ENCODE measurements at regions of chr14 and their contacts with region 1.

Region 1: GRCh38 chr14:64387694-64388532 is at the start of gene MTHFD1:
- DNase-seq: peak; percentile 97
- H3K4me3 Mint-ChIP-seq: peak within 1 kb of the TSS; percentile 86
- H3K27ac Mint-ChIP-seq: peak within 1 kb of the TSS; percentile 92
- H3K4me1 Mint-ChIP-seq: peaks cover 33% of the 10 kb centered on the region
- H3K27me3 Mint-ChIP-seq: no peaks in the 10 kb centered on the region
- total RNA-seq, gene MTHFD1: 291 and 309 TPM in 2 replicates

Region 2: DNA sequence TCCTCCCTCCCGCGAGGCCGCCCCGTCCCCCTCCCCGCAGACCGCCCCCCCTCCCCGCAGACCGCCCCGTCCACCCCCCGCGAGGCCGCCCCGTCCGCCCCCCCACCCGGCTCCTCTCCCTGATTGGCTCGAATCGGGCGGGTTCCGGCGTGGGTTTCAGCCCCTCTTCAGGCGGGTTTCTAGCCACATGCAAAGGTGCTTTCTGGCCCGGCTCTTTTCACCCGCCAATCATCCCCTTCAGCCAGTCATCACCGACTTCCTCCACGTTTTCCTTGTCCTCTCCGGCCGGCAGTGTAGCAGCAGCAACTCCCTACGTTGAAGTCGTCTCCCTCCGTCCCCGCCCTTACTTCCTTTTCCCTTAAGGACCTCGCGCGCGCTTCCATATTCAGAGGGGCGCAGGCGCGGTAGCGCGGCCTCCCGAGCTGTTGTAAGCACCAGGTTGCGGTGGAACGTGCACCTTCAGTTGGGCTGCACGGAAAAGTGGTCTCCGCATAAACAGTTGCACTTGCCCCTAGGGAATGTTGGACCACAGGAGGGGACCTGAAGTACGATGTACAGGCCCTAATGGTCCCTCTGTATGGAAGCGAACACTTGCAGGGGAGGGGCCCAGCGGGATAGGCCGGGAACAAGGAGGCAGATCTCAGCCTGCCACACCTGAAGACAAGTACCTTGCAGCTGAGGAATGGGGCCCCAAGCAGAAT is 49.1 kb before region 1 on chr14:
- intact Hi-C with region 1: loop called (anchors 1 kb)
- DNase-seq: peak; percentile 89
- H3K4me3 Mint-ChIP-seq: peak overlapping the region; percentile 91
- H3K27ac Mint-ChIP-seq: peak overlapping the region; percentile 80
- H3K4me1 Mint-ChIP-seq: peaks cover 23% of the 10 kb centered on the region
- H3K27me3 Mint-ChIP-seq: no peaks in the 10 kb centered on the region

Region 3: DNA sequence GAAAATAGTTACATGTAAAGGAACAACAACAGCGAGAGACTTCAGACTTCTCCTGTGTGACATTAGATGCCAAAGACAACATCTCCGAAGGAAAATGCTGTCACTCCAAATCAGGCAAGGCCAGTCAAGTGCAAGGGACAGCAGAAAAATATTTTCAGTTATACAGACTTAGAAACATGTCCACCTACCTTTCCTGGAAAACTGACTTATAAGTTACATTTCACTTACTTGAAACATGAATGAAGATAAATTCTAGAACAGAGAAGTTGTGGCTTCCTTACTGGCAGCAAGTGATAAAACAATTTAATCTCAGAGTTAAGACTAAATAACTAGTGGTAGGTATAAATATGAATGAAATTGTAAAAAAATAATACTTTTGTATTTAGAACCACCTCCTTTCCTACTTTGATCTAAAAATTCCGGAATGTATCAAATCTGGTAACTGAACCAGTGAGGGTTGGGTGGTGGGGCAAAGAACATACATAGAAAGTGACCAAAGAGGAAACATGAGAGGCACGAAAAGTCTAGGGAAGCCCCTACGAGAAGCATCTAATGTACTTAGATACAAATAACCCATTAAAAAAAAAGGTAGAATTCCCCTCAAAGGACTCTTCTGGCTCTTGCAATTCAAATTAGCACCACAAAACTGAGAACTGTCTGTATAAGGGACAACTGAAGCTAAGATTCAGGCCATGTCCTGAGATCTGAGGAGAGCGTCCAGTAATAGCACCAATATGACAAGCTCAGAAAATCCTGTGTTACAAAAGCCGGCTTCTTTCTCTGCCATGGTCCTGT is 21.4 kb after region 1 on chr14:
- intact Hi-C with region 1: loop called (anchors 2 kb)
- DNase-seq: no peak
- H3K4me3 Mint-ChIP-seq: peak overlapping the region; percentile 13
- H3K27ac Mint-ChIP-seq: peak overlapping the region; percentile 75
- H3K4me1 Mint-ChIP-seq: peaks cover 61% of the 10 kb centered on the region
- H3K27me3 Mint-ChIP-seq: no peaks in the 10 kb centered on the region

Region 4: DNA sequence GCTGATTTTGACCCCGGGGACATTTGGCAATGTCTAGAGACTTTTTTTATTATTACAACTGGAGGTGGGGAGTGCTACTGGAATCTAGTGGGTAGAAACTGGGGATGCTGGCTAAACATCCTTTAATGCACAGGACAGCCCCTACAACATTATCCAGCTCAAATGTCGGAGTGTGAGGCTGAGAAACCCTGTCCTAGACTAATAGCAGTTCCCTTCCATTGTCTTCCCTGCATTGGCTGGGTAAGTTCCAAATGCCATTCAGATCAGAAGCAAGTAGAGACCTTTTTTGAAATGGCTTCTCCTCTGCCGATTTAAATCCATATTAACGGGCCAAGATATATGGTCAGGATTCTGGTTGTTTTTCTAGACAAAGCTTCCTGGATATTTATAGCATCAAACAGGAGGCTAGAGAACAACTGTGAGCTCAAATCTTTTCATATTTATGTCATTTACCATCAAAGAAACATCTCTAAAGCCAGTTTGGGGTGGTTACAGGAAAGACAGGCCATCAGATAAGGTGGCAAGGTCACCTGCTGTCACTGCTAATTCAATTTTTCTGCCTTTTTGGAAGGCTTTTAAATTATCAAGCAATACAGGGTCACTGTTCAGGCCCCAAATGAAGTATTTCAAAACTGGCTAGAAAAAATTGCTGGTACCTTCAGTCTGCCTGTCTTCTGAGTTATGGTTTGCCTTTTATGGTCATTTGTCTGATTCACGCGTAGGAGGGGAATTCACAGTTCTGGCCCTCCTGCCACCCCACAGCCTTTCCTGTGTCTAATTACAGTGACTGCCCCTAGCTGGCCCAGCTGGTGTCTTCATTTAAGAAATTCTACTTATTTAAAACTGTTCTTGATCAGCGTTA is 57.3 kb after region 1 on chr14:
- intact Hi-C with region 1: loop called (anchors 1 kb)
- DNase-seq: no peak
- H3K4me3 Mint-ChIP-seq: peak overlapping the region; percentile 14
- H3K27ac Mint-ChIP-seq: peak overlapping the region; percentile 81
- H3K4me1 Mint-ChIP-seq: peaks cover 29% of the 10 kb centered on the region
- H3K27me3 Mint-ChIP-seq: no peaks in the 10 kb centered on the region

Region 5: DNA sequence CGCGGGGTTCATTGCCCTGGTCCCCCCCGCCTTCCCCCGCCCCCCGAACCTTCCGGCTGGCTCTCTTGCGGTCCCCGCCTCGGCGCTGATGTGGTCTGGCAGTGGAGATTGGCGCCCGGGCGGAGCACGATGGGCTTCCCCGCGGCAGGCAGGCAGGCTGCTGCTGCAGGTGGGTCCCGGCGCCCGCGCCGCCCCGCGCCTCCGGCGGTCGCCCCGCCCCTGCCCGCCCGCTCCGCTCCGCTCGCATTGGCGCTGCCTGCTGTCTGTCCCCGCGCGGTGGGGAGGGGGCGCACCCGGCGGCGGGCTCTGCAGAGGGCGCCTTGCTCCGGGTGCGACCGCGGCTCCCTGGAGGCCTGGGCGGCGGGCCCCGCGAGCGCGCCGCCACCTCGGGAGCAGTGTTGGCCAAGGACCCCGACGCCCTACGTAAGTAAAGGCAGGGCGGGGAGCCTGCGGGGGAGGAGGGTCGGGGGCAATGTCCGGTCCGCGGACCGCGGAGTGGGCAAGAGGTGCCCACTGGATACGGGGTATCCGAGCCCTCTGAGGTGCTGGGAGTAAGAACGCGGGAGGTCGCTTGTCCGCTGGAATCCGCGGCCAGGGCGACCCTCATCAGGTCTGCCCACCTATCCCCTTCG is 77.4 kb after region 1 on chr14 and contains the start of gene AKAP5:
- intact Hi-C with region 1: loop called (anchors 5 kb)
- DNase-seq: peak; percentile 56
- H3K4me3 Mint-ChIP-seq: peak within 1 kb of the TSS; percentile 84
- H3K27ac Mint-ChIP-seq: peak within 1 kb of the TSS; percentile 70
- H3K4me1 Mint-ChIP-seq: peaks cover 35% of the 10 kb centered on the region
- H3K27me3 Mint-ChIP-seq: no peaks in the 10 kb centered on the region
- total RNA-seq, gene AKAP5: 2.3 and 2.5 TPM in 2 replicates

Measured in activated T-helper 2 cell treated with anti-CD3 and anti-CD28 coated beads, Interferon-gamma antibody, Interleukin-2, Interleukin-4, amounts not matched to agents 10 μg/mL and 5 μg/mL and 100 μg/mL, durations not matched to agents 14 hours and 24 hours and 36 hours (primary cell).